ENCODE measurements at regions of chr7 and their contacts with region 1.

Region 1: GRCh38 chr7:116929914-116930913 is 23.1 kb upstream of the ST7 start:
- DNase-seq: peak; percentile 77
- H3K4me3 Mint-ChIP-seq: no peak overlapping the region
- H3K27ac Mint-ChIP-seq: no peak overlapping the region
- H3K4me1 Mint-ChIP-seq: peaks cover 3% of the 10 kb centered on the region
- H3K27me3 Mint-ChIP-seq: peaks cover 16% of the 10 kb centered on the region

Region 2: DNA sequence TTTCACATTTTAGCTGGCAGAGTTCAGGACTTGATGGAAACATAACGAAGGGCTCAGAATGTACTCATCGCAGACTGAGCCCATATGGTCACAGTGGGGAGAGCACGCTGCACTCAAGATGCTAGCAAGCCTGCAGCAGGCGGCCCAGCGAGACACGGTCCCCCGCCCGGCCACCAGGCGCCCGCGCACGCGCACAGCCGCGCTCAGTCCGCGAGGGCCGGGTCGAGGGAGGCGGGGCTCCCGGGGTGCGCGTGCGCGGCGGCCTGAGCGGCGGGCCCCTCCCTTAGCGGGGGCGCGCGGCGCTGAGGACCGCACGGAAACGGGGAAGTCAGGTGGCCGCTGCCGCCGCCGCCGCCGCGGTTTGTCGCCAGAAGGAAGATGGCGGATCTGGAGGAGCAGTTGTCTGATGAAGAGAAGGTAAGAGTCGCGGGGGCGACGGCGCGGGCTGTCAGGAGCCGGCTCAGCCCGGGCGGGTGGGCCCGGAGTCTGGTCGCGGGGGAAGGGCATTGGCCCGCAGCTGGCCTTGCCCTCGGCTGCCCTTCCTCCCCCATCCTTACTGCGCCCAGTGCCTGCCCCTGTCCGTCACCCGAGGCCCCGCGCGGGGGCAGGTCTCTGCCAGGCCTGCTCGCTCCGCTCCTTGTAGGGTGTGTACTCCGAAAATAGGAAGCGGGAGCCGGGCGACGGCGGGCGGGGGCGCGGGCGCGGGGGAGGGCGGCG is 67.8 kb before region 1 on chr7 and contains the start of gene CAPZA2:
- CTCF ChIA-PET with region 1: no interaction called
- POLR2A ChIA-PET with region 1: no interaction called
- DNase-seq: peak; percentile 95
- H3K4me3 Mint-ChIP-seq: peak within 1 kb of the TSS; percentile 97
- H3K27ac Mint-ChIP-seq: peak within 1 kb of the TSS; percentile 93
- H3K4me1 Mint-ChIP-seq: peaks cover 35% of the 10 kb centered on the region
- H3K27me3 Mint-ChIP-seq: peaks cover 9% of the 10 kb centered on the region
- total RNA-seq, gene CAPZA2: 152 to 155 TPM

Region 3: GRCh38 chr7:116912269-116912909 is 17.8 kb before region 1 on chr7:
- CTCF ChIA-PET with region 1: interaction called, 10 read pairs
- POLR2A ChIA-PET with region 1: no interaction called
- DNase-seq: no peak
- H3K4me3 Mint-ChIP-seq: no peak overlapping the region
- H3K27ac Mint-ChIP-seq: no peak overlapping the region
- H3K4me1 Mint-ChIP-seq: no peaks in the 10 kb centered on the region
- H3K27me3 Mint-ChIP-seq: no peaks in the 10 kb centered on the region

Region 4: DNA sequence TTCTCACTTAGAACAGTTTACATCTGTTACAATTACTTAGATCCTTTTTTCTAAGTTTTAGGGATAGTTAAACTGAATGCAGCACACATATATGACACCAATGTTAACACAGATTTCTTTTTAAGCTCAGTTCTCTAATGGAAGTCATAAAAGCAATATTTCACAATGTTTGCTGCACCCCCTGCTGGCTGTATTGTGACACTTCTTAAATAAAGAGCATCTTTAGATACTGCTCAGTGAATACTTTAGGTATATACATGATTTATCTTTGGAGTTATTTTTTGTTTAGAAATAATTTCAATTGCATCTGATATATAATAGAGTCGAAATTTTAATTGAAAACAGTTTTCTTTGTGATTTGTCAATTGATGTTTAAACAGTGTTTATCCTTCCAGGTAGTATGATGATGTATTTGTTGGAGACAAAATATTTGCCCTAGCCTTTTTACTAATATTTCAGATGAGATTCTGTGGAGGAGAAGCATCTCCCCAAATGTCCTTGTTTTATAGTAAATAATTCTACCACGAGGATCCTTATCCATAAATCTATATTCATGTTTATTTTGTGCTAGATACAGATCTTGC is 197.5 kb after region 1 on chr7:
- CTCF ChIA-PET with region 1: interaction called, 80 read pairs
- POLR2A ChIA-PET with region 1: no interaction called
- DNase-seq: peak; percentile 45
- H3K4me3 Mint-ChIP-seq: no peak overlapping the region
- H3K27ac Mint-ChIP-seq: no peak overlapping the region
- H3K4me1 Mint-ChIP-seq: peaks cover 12% of the 10 kb centered on the region
- H3K27me3 Mint-ChIP-seq: no peaks in the 10 kb centered on the region

Measured in activated CD4-positive, alpha-beta memory T cell treated with anti-CD3 and anti-CD28 coated beads, Interleukin-2, amount 10 ng/mL, durations not matched to agents 7 days and 5 days (primary cell).